ENCODE measurements at regions of chr9 and their contacts with region 1.

Region 1: DNA sequence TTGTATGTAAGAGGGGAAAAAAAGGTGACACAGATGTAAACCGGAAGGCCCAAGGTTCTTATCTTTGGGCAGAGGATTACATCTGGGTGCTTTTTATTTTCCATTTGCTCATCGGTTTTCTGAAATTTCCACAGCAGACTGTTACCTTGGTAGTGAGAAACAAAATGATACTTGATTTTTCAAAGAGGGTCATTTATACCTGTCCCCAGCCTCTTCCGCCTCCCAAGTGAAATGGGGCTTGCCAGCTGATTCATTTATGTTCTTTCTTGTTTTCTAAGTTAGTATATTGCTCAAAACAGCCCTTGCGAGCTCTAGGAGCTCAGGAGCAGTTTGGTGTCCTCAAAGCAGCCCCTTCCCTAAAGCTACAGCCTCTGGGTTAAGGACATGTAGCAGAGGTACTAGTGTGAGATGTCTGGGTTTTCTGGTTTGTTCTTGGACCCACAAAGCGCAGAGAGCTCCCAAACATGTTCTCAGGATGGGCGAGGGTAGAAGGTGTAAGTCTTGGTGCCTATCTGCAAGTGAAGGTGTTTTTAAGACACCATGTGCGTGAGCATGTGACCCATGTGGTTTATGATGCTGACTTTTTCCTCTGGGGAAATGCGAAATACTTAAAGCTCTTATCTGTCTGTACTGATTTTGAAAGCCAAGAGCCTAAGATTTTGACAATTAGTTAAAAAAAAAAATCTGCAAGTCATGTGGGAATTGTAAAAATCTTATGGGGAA is 38.3 kb downstream of the DAPK1 start:
- DNase-seq: peak; percentile 69
- ATAC-seq: peak; percentile 84
- H3K4me3 Mint-ChIP-seq: peak overlapping the region; percentile 5
- H3K27ac Mint-ChIP-seq: peak overlapping the region; percentile 91
- H3K4me1 Mint-ChIP-seq: peaks cover 13% of the 10 kb centered on the region
- H3K27me3 Mint-ChIP-seq: no peaks in the 10 kb centered on the region

Region 2: GRCh38 chr9:87375397-87376073 is 160.4 kb before region 1 on chr9:
- CTCF ChIA-PET with region 1: no interaction called
- POLR2A ChIA-PET with region 1: interaction called, 8 read pairs
- intact Hi-C with region 1: loop called in 1 of 2 experiments (anchors 1 kb)
- DNase-seq: no peak
- ATAC-seq: no peak
- H3K4me3 Mint-ChIP-seq: no peak overlapping the region
- H3K27ac Mint-ChIP-seq: no peak overlapping the region
- H3K4me1 Mint-ChIP-seq: peaks cover 15% of the 10 kb centered on the region
- H3K27me3 Mint-ChIP-seq: peaks cover 37% of the 10 kb centered on the region